HAP-1 (cell line): ENCODE measurements at regions of chr4 and their contacts with region 1.

Region 1: GRCh38 chr4:1344696-1345095 is 2.3 kb upstream of the UVSSA start:
- DNase-seq: no peak
- H3K4me3 ChIP-seq: no peak overlapping the region
- H3K4me1 ChIP-seq: peaks cover 2% of the 10 kb centered on the region; the same call in 1 of the 2 replicates
- H3K27me3 ChIP-seq: no peaks in the 10 kb centered on the region

Region 2: GRCh38 chr4:1043658-1044468 is 300.8 kb before region 1 on chr4:
- in situ Hi-C with region 1: no loop called
- DNase-seq: peak in 1 of 2 experiments; percentile 40
- H3K4me3 ChIP-seq: no peak overlapping the region
- H3K4me1 ChIP-seq: peaks cover 11% of the 10 kb centered on the region
- H3K27me3 ChIP-seq: no peaks in the 10 kb centered on the region

Region 3: DNA sequence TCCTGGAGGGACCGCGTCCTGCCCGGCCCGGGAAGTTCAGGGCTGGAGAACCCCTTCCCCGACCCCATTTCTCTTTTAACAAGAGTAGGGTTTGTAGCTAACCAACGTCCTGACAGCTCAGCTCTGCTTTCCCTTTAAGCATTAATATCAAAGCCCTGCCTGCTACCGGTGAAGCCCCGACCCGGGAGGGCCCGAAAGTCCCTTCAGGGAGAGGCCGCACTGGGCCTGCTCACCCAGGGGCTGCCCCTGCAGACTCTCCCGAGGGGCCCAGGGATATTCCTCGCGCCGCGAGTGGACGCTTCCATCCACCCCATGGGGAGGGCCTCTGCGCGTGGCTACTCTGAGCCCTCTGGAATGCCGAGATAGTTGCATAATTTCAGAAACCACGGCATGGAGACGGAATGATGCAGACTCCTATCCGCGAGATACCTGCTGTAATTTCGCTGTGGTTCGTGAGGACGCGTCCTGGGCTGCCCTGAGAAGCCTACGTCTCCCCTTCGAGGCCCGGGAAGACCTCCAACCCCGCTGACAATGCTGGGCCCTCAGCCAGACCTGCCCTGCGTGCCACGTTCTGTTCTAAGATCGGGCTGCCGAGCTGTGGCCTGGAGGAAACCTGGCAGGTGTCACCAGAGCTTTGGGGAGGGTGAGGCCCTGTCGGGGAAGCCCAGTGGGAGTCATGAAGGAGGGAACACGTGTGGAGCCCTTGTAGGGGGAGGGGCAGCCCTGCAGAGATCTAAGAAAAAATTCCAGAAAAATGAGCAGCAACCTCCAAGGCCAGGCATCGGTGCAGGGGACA is 94.8 kb before region 1 on chr4:
- in situ Hi-C with region 1: loop called (anchors 5 kb)
- DNase-seq: peak in 1 of 2 experiments; percentile 22
- H3K4me3 ChIP-seq: peak overlapping the region; percentile 31
- H3K4me1 ChIP-seq: peaks cover 13% of the 10 kb centered on the region
- H3K27me3 ChIP-seq: no peaks in the 10 kb centered on the region

Region 4: GRCh38 chr4:1767770-1768366 is 423.2 kb after region 1 on chr4:
- in situ Hi-C with region 1: no loop called
- DNase-seq: peak; percentile 34 to 81
- H3K4me3 ChIP-seq: peak overlapping the region; percentile 13
- H3K4me1 ChIP-seq: peaks cover 23% of the 10 kb centered on the region
- H3K27me3 ChIP-seq: no peaks in the 10 kb centered on the region